RWPE1 (cell line): ENCODE measurements at regions of chr17 and their contacts with region 1.

Region 1: DNA sequence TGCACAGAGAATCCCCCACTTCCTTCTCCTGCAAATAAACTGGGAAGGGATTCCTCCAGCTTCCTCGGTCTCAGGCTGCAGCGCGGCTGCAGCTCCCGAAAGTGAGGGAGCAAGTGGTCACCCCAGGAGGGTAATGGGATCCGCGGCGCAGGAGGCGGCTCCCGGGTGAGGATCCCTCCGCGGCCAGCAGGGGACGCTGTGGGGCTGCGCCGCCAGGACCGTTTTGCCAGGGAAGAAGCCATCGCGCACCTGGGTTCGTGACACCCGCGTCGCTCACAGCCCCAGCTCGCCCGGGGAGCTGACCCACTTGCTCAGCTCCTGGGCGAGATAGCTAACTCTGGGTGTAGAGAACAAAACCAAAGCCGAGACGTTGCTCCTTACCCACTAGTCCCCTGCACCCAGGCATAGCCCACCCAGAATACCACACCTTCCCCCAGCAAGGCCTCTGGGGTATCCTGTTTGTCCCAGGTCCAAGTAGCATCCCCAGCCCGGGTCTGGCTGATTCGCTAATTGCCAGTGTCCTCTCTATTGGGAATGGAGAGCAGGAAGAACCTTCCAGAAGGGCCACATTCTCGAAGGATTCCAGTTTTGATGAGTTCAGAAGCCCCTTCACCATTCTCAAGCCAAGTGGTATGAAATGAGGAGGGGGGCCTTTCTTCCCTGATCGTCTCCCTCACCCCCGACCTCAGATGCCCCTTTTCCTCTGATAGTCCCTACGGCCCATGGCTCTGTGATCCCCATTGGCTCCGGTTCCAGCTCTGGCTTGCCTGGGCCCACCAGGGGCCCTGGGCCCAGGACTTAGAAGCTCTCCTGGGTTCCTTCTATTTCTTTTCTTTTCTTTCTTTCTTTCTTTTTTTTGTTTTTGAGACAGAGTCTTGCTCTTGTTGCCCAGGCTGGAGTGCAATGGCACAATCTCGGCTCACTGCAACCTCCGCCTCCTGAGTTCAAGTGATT is 14.1 kb downstream of the CYGB start:
- DNase-seq: peak; percentile 82
- H3K27ac ChIP-seq: peak overlapping the region; percentile 86
- CTCF ChIP-seq: peak; percentile 100

Region 2: DNA sequence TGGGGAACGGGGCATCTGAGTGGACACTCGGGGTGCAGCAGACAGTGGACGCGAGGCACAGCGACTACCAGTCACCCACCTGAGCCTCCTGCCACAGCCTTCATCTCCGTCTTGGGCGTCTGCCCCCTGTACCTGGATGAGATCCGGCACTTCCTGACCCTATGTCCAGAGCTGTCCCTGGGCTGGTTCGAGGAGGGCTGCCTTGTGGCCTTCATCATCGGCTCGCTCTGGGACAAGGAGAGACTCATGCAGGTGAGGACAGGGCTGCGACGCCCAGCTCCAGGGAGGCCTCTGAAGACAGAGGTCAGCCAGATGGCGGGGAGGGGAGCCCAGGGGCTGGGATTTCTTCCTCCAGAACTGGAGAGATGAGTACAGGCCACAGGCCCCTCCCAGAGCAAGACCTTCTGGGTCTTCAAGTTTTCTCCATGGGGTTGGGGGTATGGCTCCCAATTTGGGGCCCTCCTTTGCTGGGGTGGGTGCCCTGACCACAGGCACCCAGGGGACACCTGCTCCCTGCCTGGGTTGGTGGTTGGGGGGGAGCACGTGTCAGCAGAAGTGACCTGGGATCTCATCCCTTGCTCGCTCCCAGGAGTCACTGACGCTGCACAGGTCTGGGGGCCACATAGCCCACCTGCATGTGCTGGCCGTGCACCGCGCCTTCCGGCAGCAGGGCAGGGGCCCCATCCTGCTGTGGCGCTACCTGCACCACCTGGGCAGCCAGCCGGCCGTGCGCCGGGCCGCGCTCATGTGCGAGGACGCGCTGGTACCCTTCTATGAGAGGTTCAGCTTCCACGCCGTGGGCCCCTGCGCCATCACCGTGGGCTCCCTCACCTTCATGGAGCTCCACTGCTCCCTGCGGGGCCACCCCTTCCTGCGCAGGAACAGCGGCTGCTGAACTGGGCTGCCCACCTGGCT is 54.0 kb before region 1 on chr17:
- CTCF ChIA-PET with region 1: no interaction called
- POLR2A ChIA-PET with region 1: no interaction called
- DNase-seq: no peak
- H3K27ac ChIP-seq: 0 out of 2 replicates have a peak overlapping the region, but pooled peaks have one; percentile 5
- CTCF ChIP-seq: no peak

Region 3: DNA sequence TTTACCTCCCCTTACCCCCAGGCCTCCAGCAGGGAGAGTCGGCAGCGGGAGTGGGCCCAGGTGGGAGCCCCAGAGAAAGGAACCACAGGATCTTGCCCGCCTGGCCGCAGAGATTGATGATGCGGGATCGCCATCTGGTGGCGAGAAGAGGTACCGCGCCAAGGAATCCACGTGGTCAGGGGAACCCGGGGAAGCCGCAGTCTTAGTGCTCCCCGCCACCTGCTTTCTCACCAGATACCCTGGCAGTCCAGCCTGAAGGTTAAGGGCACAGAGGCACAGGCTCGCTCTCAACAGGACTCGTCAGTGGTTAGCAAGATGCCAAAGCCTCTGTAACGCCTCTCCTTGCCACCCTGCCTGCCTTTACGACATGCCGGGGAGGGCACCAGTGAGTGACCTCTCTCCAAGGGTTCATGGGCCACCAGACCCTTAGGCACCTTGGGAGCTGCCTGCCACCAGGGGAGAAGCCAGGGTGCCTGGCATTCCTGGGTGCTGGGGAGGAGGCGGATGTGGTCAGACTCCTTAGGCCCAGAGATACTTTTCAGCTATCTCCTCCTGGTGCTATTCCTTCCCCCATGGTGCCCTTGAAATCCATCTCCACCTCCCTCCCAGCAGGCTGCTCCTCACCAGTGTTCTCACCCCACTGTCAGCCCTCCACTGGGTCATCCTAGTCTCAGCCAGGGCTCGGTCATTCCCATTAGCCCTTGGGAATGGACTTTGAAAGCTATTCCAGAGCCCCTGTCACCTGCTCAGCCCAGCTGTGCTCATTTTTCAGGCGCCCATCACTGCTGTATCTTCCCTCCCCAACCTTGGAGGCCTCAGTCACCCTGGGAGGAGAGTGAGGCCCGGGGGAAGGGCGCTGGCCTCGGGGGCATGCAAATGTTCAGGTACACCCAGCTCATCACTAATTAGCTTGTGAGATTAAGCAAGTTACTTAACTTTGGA is 16.7 kb before region 1 on chr17:
- CTCF ChIA-PET with region 1: interaction called, 13 read pairs
- POLR2A ChIA-PET with region 1: no interaction called
- DNase-seq: peak; percentile 81
- H3K27ac ChIP-seq: no peak overlapping the region
- CTCF ChIP-seq: peak; percentile 91

Region 4: DNA sequence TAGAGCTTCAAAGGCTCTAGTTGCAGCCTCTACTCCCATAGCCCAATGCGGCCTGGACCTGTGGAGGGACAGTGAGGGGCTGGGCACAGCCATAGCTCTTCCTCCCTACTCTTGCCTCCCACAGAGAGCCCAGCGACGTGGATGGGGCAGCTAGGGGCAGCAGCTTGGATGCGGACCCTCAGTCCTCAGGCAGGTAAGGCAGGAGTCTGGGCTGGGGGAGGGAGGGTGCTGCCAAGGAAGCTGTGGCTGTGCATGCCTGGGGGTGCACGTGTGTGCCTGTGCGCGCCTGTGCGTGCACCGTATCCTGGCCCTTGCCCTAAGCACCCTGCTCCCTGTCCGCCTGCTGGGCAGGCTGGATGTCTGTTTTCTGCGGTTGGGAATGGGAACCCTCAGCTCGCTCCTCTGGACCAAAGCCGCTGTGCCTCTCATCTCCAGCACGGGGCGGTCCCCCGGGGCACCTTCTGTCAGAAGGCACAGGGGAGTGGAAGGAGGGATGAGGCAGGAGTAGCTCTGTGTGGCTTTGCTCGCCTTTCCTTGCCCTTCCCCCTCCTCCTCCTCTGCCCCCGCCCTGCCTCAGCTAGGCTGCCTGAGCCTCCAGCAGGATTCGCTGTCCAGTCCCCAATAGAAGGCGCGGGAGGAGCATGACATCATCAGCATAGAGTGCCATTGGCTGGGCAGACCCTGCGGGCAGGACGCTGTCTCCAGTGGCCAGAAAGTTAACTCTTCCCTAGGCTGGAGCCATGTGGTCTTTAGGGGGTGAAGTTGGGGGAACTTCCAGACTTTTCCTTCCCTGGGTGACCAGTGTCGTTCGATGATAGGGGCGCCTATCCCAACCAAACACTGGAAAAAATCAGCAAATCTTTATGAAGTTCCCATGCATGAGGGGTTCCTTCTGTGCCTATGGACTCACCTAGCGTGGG is 17.3 kb after region 1 on chr17:
- CTCF ChIA-PET with region 1: interaction called, 19 read pairs
- POLR2A ChIA-PET with region 1: no interaction called
- DNase-seq: peak; percentile 95
- H3K27ac ChIP-seq: peak overlapping the region; percentile 84
- CTCF ChIP-seq: no peak

Region 5: GRCh38 chr17:76557368-76558197 is 34.2 kb after region 1 on chr17:
- CTCF ChIA-PET with region 1: interaction called, 13 read pairs
- POLR2A ChIA-PET with region 1: interaction called, 3 read pairs
- DNase-seq: peak; percentile 83
- H3K27ac ChIP-seq: peak overlapping the region; percentile 94
- CTCF ChIP-seq: peak; percentile 55

Region 6: GRCh38 chr17:76623271-76624146 is 100.1 kb after region 1 on chr17:
- CTCF ChIA-PET with region 1: interaction called, 16 read pairs
- POLR2A ChIA-PET with region 1: no interaction called
- DNase-seq: peak; percentile 72
- H3K27ac ChIP-seq: no peak overlapping the region
- CTCF ChIP-seq: peak; percentile 98

Region 7: GRCh38 chr17:76689859-76690258 is 166.5 kb after region 1 on chr17:
- CTCF ChIA-PET with region 1: no interaction called
- POLR2A ChIA-PET with region 1: no interaction called
- DNase-seq: no peak
- H3K27ac ChIP-seq: no peak overlapping the region; the same call in 1 of the 2 replicates
- CTCF ChIP-seq: no peak